Right ventricle myocardium inferior (tissue), 1 donor: ENCODE measurements at regions of chr4 and their contacts with region 1.

Region 1: GRCh38 chr4:155442267-155443105 is 65.7 kb upstream of the MAP9 start:
- DNase-seq: peak; percentile 90
- ATAC-seq: peak; percentile 88

Region 2: DNA sequence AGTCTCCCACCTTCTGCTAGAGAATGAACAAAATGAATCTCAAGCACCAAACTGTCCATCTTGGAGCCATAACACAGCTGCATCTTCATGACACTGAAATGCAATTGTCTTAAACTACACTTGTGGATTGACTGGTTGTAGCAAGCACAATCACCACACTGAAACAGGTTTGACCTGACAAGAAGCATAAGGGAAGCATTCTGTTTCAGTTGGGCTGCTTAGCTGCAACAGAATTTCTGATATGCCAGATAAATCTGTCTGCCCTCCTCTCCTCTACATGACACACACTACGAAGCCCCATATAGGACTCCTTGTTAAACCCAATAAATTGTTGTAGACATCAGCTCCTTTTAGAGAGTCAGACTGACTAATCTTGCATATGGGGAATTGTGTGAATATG is 335.9 kb before region 1 on chr4:
- intact Hi-C with region 1: no loop called
- DNase-seq: no peak
- ATAC-seq: no peak

Region 3: DNA sequence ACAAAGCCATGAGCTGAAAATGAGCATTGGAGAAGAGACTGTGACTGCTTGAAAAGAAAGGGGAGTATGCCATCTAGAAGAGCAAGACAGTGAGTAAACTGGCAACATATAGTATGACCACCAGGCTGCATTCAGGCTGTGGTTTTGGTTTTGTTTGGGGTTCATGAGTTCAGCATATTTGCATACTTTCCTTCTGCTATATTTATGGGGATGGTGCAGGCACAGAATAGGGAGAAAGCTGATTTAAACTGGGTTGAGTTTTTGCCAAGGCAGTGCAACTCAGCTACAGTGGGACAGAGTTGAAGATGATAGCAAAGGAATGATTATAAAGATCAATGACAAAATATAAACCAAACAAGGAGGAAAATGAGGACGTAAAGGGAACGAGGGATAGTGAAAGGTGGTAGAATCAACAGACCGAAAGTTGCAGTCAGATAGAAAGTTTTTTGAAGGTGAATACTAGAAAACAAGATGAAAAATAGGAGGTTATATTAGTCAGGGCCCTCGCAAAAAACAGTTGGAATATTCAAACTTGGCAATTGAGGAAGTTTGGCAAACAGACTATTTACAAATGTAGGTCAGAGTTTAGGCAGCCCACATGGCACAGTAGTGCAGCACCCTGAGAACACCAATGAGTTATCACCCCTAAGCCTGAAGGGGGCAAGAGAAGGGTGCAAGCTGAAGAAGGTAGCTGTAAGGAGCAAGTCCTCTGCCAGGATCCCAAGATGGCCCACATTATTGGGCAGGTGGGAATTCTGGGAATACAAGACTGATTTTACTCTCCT is 49.0 kb after region 1 on chr4:
- intact Hi-C with region 1: no loop called
- DNase-seq: no peak
- ATAC-seq: no peak

Region 4: GRCh38 chr4:155512817-155513216 is 70.3 kb after region 1 on chr4:
- intact Hi-C with region 1: loop called (anchors 5 kb)
- DNase-seq: no peak
- ATAC-seq: peak; percentile 69

Region 5: DNA sequence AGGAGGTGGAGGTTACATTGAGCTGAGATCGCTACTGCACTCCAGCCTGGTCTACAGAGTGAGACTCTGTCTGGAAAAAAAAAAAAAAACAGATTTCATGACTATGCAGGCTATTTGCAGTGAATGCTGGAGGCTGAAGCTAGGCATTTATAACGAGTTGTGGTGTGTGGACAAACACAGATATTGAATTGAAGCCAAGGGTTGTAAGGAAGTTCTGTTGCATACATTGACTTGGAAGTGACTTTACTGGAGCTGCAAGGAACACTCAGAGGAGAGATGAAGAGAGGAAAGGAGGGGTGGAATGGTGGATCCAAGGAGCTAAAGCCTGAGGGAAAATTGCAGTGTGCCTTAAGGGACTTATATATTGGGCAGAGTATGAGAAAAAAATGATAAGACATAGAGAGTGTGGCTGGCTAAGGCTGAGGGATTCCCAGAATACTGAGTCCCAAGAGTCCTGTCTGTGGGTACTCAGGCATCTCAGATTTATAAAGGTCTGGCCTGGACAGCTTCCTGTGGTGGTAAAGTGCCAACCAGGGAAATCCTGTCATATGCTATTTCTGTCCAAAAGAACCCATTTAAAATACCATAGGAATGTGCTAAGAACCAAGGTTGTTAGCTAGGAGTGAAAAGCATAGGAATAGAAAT is 136.4 kb after region 1 on chr4:
- intact Hi-C with region 1: loop called (anchors 10 kb)
- DNase-seq: no peak
- ATAC-seq: no peak

Region 6: GRCh38 chr4:155758481-155759404 is 316.3 kb after region 1 on chr4 and contains the start of gene GUCY1B1:
- intact Hi-C with region 1: loop called (anchors 1 kb)
- DNase-seq: peak; percentile 96
- ATAC-seq: peak; percentile 98
- total RNA-seq, gene GUCY1B1: 32.6 TPM

Region 7: GRCh38 chr4:155787113-155787710 is 344.7 kb after region 1 on chr4:
- intact Hi-C with region 1: loop called (anchors 2 kb)
- DNase-seq: no peak
- ATAC-seq: peak; percentile 78